Left ventricle myocardium superior (tissue), 1 donor: ENCODE measurements at regions of chr13 and their contacts with region 1.

Region 1: GRCh38 chr13:36973621-36974295 is 25.4 kb downstream of the ALG5 start:
- DNase-seq: no peak
- ATAC-seq: no peak

Region 2: GRCh38 chr13:36420437-36420891 is 553.3 kb before region 1 on chr13:
- intact Hi-C with region 1: loop called (anchors 10 kb)
- DNase-seq: peak; percentile 47
- ATAC-seq: peak; percentile 71

Region 3: DNA sequence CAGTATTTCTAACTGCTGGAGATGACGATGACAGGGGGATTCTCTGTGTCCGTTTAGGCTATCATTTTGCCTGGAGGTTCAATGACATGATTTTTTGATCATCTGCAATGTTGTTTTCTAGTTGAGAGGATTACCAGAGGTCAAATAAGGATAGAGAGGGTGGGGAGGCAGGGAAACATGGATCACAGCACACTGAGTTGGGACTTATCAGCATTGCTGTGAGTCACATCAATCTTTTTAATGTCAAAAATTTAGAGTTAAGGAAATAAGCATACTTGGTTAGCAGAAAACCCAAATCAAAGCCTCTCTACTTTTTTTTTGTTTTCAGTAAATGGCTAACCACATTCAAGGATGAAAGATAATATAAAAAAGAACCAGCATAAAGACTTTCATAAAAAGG is 174.7 kb after region 1 on chr13:
- intact Hi-C with region 1: no loop called
- DNase-seq: no peak
- ATAC-seq: no peak